Panc1 (cell line): ENCODE measurements at regions of chr4 and their contacts with region 1.

Region 1: DNA sequence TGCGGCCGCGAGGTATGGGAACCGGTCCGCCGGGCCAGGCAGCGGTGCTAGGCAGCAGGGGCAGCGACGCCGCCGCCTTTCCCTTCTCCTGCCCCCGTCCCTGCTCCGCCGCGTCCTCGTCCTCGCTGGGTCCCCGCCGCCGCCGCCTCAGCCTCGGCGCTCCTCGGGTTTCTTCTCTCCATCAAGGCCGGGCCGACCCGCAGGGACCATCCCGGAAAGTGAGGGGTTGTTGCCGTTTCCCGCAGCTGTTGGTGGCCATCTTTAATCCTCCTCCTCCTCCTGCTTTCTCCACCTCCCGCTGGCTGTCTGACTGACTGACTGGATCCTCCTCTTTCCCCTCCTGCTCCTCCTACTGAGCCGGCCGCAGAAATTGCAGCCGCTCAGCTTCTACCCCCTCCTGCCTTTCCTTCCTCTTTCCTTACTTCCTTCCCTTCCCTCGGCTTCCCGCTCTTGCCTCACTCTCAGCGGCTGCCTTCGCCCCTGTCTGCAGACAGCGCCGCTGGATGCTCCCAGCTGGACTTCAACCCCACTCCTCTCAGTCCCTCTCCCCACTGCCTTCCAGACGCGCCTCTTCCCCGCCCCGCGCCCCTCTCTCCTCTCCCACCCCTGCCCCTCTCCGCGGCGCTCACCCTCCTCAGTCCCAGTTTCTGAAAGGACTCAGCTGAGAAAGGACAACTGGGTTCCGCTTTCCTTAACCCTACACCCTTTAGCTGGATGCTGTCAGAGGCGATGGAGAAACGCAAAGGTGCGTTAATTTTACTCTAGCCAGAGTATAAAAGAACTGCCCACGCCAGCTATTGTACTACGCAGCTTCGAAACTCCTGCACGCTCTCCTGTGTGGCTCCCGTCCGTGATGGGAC is at the start of gene WDFY3:
- DNase-seq: no peak
- ATAC-seq: peak; percentile 97
- H3K4me3 ChIP-seq: peak within 1 kb of the TSS; percentile 75 to 89
- H3K27ac ChIP-seq: peak within 1 kb of the TSS; percentile 92
- H3K4me1 ChIP-seq: peaks cover 9% of the 10 kb centered on the region; the same call in 1 of the 2 replicates
- H3K27me3 ChIP-seq: no peaks in the 10 kb centered on the region
- CTCF ChIP-seq: no peak
- total RNA-seq, gene WDFY3: 47.8 TPM

Region 2: GRCh38 chr4:84530871-84531270 is 435.7 kb before region 1 on chr4:
- CTCF ChIA-PET with region 1: no interaction called
- POLR2A ChIA-PET with region 1: no interaction called
- in situ Hi-C with region 1: no loop called
- intact Hi-C with region 1: loop called (anchors 5 kb)
- DNase-seq: no peak
- ATAC-seq: peak; percentile 85
- H3K4me3 ChIP-seq: no peak overlapping the region
- H3K27ac ChIP-seq: peak overlapping the region; percentile 90
- H3K4me1 ChIP-seq: peaks cover 30% of the 10 kb centered on the region
- H3K27me3 ChIP-seq: no peaks in the 10 kb centered on the region
- CTCF ChIP-seq: no peak

Region 3: GRCh38 chr4:84582302-84583000 is 384.2 kb before region 1 on chr4:
- CTCF ChIA-PET with region 1: no interaction called
- POLR2A ChIA-PET with region 1: no interaction called
- in situ Hi-C with region 1: no loop called
- intact Hi-C with region 1: loop called (anchors 5 kb)
- DNase-seq: no peak
- ATAC-seq: peak; percentile 90
- H3K4me3 ChIP-seq: peak overlapping the region; percentile 64 to 66
- H3K27ac ChIP-seq: peak overlapping the region; percentile 65; the same call in 1 of the 2 replicates
- H3K4me1 ChIP-seq: no peaks in the 10 kb centered on the region; the same call in 1 of the 2 replicates
- H3K27me3 ChIP-seq: peaks cover 6% of the 10 kb centered on the region
- CTCF ChIP-seq: no peak

Region 4: GRCh38 chr4:84750253-84750959 is 216.2 kb before region 1 on chr4:
- CTCF ChIA-PET with region 1: interaction called, 9 read pairs
- POLR2A ChIA-PET with region 1: no interaction called
- in situ Hi-C with region 1: no loop called
- intact Hi-C with region 1: loop called (anchors 5 kb)
- DNase-seq: peak; percentile 24
- ATAC-seq: no peak
- H3K4me3 ChIP-seq: no peak overlapping the region
- H3K27ac ChIP-seq: no peak overlapping the region
- H3K4me1 ChIP-seq: no peaks in the 10 kb centered on the region
- H3K27me3 ChIP-seq: no peaks in the 10 kb centered on the region
- CTCF ChIP-seq: peak; percentile 59; the same call in 1 of the 2 replicates

Region 5: GRCh38 chr4:85153221-85153620 is 186.6 kb after region 1 on chr4:
- CTCF ChIA-PET with region 1: no interaction called
- POLR2A ChIA-PET with region 1: no interaction called
- in situ Hi-C with region 1: no loop called
- intact Hi-C with region 1: no loop called
- DNase-seq: no peak
- ATAC-seq: no peak
- H3K4me3 ChIP-seq: no peak overlapping the region
- H3K27ac ChIP-seq: no peak overlapping the region
- H3K4me1 ChIP-seq: no peaks in the 10 kb centered on the region
- H3K27me3 ChIP-seq: no peaks in the 10 kb centered on the region
- CTCF ChIP-seq: no peak